Activated B cell treated with CpG ODN at 0.5 μM for 24 hours (primary cell): ENCODE measurements at regions of chr1 and their contacts with region 1.

Region 1: GRCh38 chr1:155250633-155251449 is 4.4 kb downstream of the ENTREP3 start:
- DNase-seq: peak; percentile 95
- ATAC-seq: peak; percentile 96
- H3K4me3 Mint-ChIP-seq: peak overlapping the region; percentile 73
- H3K27ac Mint-ChIP-seq: peak overlapping the region; percentile 39
- H3K4me1 Mint-ChIP-seq: peaks cover 29% of the 10 kb centered on the region
- H3K27me3 Mint-ChIP-seq: no peaks in the 10 kb centered on the region
- CTCF ChIP-seq: peak; percentile 84

Region 2: GRCh38 chr1:155208541-155209311 is 42.1 kb before region 1 on chr1 and contains the start of gene MTX1:
- CTCF ChIA-PET with region 1: interaction called, 21 read pairs
- POLR2A ChIA-PET with region 1: interaction called, 7 read pairs
- intact Hi-C with region 1: no loop called
- DNase-seq: peak; percentile 85
- ATAC-seq: peak; percentile 81
- H3K4me3 Mint-ChIP-seq: peak within 1 kb of the TSS; percentile 85
- H3K27ac Mint-ChIP-seq: peak within 1 kb of the TSS; percentile 91
- H3K4me1 Mint-ChIP-seq: peaks cover 20% of the 10 kb centered on the region
- H3K27me3 Mint-ChIP-seq: no peaks in the 10 kb centered on the region
- CTCF ChIP-seq: no peak
- total RNA-seq, gene MTX1: 36.7 and 38.2 TPM in 2 replicates

Region 3: DNA sequence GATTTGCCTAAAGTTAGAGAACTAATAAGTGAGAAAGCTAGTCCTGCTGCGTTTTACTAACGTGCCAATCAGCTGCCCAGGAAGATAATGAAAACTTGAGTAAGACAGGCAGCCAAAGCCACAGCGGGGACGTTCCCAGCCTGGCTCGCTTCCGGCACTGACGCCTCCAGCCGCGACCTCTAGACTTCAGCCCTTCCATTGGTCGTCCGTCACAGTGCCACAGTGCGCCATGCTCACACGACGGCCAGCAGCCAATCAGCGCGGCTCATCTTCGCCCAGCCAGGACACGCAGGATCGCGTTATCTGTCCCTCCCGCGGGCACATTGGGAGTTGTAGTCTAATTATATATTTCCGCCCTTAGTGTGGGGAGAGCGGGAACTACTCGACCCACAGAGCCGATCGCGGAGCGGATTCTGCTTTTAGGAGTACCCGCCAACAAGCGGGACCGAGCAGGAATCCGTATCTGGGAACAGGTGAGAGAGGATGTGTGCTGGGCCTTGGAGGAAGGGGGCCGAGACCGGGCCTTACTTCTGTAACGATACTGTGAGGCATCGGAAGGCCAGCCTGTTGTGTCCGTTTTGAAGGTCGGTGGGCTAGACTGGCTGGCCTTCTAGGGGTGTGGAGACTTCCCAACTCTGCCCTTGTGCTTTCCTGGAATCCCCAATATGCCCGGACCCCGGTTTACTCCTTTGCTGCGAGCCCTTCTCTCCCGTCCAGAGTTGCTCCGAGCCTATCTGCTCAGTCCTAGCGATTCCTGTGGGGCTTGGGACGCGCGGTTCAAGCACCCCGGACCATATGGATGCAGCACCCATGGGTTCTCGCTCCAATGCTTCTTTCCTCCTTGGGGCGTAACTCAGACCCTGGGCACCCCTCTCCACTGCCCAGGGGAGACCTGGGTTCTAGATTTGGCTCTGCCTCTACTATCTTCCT is 57.9 kb after region 1 on chr1 and contains the start of gene FDPS:
- CTCF ChIA-PET with region 1: interaction called, 23 read pairs
- POLR2A ChIA-PET with region 1: interaction called, 7 read pairs
- intact Hi-C with region 1: loop called (anchors 1 kb)
- DNase-seq: peak; percentile 87
- ATAC-seq: peak; percentile 97
- H3K4me3 Mint-ChIP-seq: peak within 1 kb of the TSS; percentile 94
- H3K27ac Mint-ChIP-seq: peak within 1 kb of the TSS; percentile 92
- H3K4me1 Mint-ChIP-seq: peaks cover 32% of the 10 kb centered on the region
- H3K27me3 Mint-ChIP-seq: no peaks in the 10 kb centered on the region
- CTCF ChIP-seq: no peak
- total RNA-seq, gene FDPS: 241 and 242 TPM in 2 replicates

Region 4: GRCh38 chr1:155591770-155592169 is 340.9 kb after region 1 on chr1:
- CTCF ChIA-PET with region 1: interaction called, 13 read pairs
- POLR2A ChIA-PET with region 1: no interaction called
- intact Hi-C with region 1: loop called (anchors 1 kb)
- DNase-seq: no peak
- ATAC-seq: peak; percentile 58
- H3K4me3 Mint-ChIP-seq: no peak overlapping the region
- H3K27ac Mint-ChIP-seq: no peak overlapping the region
- H3K4me1 Mint-ChIP-seq: peaks cover 3% of the 10 kb centered on the region
- H3K27me3 Mint-ChIP-seq: no peaks in the 10 kb centered on the region
- CTCF ChIP-seq: no peak